ENCODE measurements at regions of chr3 and their contacts with region 1.

Region 1: DNA sequence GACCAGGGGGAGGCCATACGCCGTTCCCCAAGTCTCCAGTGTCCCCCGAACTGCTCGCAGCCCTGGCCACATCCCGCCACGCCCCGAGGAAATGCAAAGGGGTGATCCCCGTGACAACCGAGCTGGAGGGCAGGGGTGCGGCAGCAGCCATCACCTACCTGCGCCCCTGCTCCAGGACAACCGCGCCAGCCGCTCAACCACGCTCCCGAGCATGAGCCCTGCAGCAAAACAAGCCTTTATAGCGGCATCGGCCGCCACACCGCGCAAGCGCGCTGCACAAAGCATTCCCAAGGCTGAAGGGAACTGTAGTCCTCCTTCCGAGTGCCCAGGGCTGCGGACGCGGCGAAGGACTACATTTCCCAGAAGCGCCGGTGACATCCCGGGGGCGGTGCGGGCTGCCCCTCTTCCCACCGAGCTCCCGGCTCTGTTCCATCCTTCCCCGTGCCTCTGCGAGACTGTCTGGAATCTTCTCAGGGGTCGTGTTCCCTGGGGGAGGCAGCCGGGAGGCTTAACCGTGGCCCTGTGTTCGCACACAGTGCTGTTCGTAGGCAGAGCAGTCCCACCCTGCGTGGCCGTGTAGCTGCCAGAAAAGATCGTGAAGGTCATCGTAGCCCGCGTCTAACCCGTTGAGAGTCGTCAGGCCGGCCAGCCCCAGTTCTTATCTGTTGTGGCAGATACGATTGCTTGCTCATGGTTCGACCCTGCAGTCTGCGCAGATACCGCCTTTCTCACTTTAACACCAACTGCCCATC is at the start of gene ABCC5:
- DNase-seq: peak; percentile 89 to 94 (median 91)
- H3K4me3 ChIP-seq: peak within 1 kb of the TSS; percentile 100
- H3K27ac ChIP-seq: peak within 1 kb of the TSS; percentile 11 to 73
- H3K4me1 ChIP-seq: no peaks in the 10 kb centered on the region
- H3K27me3 ChIP-seq: no peaks in the 10 kb centered on the region
- CTCF ChIP-seq: peak in 2 of 3 donors; percentile 30 to 59
- EP300 ChIP-seq: no peak
- POLR2A ChIP-seq: no peak
- total RNA-seq, gene ABCC5: 16.3 to 23.1 (median 19.8) TPM

Region 2: GRCh38 chr3:183895296-183895695 is 122.6 kb before region 1 on chr3:
- intact Hi-C with region 1: loop called in 2 of 4 experiments (anchors 5 kb)
- DNase-seq: peak in 1 of 5 donors; percentile 32
- H3K4me3 ChIP-seq: no peak overlapping the region
- H3K27ac ChIP-seq: no peak overlapping the region
- H3K4me1 ChIP-seq: no peaks in the 10 kb centered on the region
- H3K27me3 ChIP-seq: no peaks in the 10 kb centered on the region
- CTCF ChIP-seq: peak in 2 of 3 donors; percentile 33 to 35
- EP300 ChIP-seq: no peak
- POLR2A ChIP-seq: no peak

Measured in ovary (tissue), 10 donors.